Ovary (tissue), 10 donors: ENCODE measurements at regions of chr20 and their contacts with region 1.

Region 1: DNA sequence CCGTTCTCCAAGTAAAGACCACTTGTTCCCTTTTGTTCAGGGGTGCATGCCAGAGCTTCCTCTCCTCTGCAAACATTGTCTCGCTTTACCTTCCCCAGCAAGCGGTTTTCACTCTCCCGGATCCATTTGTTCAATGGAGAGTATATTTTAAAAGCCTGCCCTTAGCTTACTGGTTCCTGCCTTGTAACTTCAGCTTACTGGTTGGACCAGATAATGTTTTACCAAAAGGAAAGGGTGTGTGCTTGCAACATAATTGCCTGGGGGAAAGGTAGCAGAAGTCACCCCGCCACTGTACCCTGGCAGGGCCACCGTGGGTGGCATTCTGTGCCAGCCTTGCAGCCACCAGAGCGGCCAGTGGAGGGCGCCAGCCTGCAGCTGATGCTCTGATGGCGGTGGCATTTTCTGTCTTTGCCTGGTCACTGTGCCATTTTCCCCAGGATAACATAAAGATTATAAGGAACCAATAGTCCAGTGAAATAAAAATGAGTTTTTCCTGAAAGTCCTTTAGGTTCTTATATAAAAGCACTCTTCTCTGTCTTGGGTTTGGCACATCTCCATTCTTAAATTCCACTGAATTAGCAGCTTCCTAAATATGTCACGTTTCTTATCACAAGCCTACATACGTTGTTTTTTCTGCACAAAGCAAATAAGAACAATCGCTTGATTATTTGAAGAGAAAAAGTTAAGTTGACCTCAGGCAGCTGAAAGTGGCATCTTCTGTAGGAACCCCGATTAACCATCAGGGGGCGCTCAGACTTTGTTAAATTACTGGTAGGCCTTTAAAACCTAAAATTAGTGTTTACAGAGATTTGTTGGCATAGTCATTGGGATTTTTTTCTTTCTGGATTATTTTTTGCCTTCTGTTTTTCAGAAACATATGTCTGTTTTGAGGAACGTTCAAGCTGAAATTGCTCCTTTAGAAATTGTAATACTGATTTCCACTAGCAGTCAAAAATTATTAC is 67.4 kb upstream of the XRN2 start:
- DNase-seq: peak; percentile 22 to 52 (median 42)
- H3K4me3 ChIP-seq: no peak overlapping the region
- H3K27ac ChIP-seq: no peak overlapping the region
- H3K4me1 ChIP-seq: no peaks in the 10 kb centered on the region
- H3K27me3 ChIP-seq: no peaks in the 10 kb centered on the region
- CTCF ChIP-seq: peak in 2 of 3 donors; percentile 24 to 41
- EP300 ChIP-seq: no peak
- POLR2A ChIP-seq: no peak

Region 2: GRCh38 chr20:20860078-20860806 is 375.5 kb before region 1 on chr20:
- intact Hi-C with region 1: loop called in 1 of 4 experiments (anchors 10 kb)
- DNase-seq: peak; percentile 69 to 87 (median 81)
- H3K4me3 ChIP-seq: no peak overlapping the region
- H3K27ac ChIP-seq: no peak overlapping the region
- H3K4me1 ChIP-seq: no peaks in the 10 kb centered on the region
- H3K27me3 ChIP-seq: no peaks in the 10 kb centered on the region
- CTCF ChIP-seq: peak; percentile 34 to 72 (median 63)
- EP300 ChIP-seq: no peak
- POLR2A ChIP-seq: no peak